ENCODE measurements at regions of chr17 and their contacts with region 1.

Region 1: GRCh38 chr17:47978324-47978723 is 7.4 kb downstream of the CDK5RAP3 start:
- DNase-seq: peak; percentile 63 to 93
- ATAC-seq: peak; percentile 82 to 95
- H3K4me3 ChIP-seq: no peak overlapping the region
- H3K27ac ChIP-seq: no peak overlapping the region
- H3K4me1 ChIP-seq: no peaks in the 10 kb centered on the region
- CTCF ChIP-seq: peak; percentile 82
- EP300 ChIP-seq: no peak
- POLR2A ChIP-seq: no peak
- RAD21 ChIP-seq: peak; percentile 80 to 83

Region 2: GRCh38 chr17:47789611-47790561 is 188.4 kb before region 1 on chr17:
- CTCF ChIA-PET with region 1: no interaction called
- POLR2A ChIA-PET with region 1: no interaction called
- DNase-seq: peak; percentile 79 to 92
- ATAC-seq: peak; percentile 99
- H3K4me3 ChIP-seq: peak overlapping the region; percentile 48
- H3K27ac ChIP-seq: peak overlapping the region; percentile 35 to 78; a peak in 4 of 6 replicates
- H3K4me1 ChIP-seq: peaks cover 3% of the 10 kb centered on the region; the same call in 1 of the 3 replicates
- CTCF ChIP-seq: peak; percentile 70
- EP300 ChIP-seq: no peak
- POLR2A ChIP-seq: no peak
- RAD21 ChIP-seq: peak; percentile 71 to 84

Region 3: DNA sequence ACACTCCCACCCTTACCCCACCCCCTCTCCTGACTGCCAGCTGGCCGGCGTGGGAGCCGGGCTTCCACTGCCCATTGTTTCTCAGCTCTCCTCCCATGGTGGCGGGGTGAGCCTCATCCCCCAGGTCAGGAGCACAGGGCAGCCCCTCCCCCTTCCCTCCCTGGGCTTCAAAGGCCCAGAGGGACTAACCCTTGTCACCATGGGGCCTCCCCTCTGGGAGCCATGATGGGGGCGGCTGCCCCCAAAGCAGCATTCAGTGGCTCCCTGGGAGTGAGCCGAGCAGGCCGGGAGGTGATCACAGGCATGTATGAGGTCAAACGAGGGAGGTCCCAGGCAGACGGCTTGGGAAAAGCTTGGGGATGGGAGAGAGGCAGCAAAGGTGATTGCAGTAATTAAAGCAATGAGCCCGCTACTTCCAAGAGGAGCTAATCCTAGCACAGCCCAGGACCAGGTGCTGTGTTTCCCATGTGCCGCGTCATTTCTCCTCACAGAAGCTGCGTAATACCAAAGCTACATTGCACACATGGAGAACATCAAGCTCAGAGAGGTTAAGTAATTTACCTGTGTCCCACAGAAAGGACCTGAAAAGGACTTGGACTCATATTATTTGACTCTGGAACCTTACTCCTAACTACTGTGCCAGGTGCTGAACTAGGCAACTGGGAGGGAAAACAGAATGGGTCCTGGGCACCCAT is 17.1 kb after region 1 on chr17:
- CTCF ChIA-PET with region 1: interaction called, 174 read pairs
- POLR2A ChIA-PET with region 1: no interaction called
- DNase-seq: no peak
- ATAC-seq: no peak
- H3K4me3 ChIP-seq: no peak overlapping the region
- H3K27ac ChIP-seq: no peak overlapping the region
- H3K4me1 ChIP-seq: no peaks in the 10 kb centered on the region
- CTCF ChIP-seq: no peak
- EP300 ChIP-seq: no peak
- POLR2A ChIP-seq: no peak
- RAD21 ChIP-seq: no peak

Region 4: GRCh38 chr17:48002266-48002915 is 24.1 kb after region 1 on chr17:
- CTCF ChIA-PET with region 1: interaction called, 766 read pairs
- POLR2A ChIA-PET with region 1: no interaction called
- DNase-seq: peak; percentile 36 to 56
- ATAC-seq: peak in 1 of 2 experiments; percentile 64; a peak in 3 of 6 replicates
- H3K4me3 ChIP-seq: no peak overlapping the region
- H3K27ac ChIP-seq: peak overlapping the region; percentile 75 to 84
- H3K4me1 ChIP-seq: peaks cover 16% of the 10 kb centered on the region
- CTCF ChIP-seq: no peak
- EP300 ChIP-seq: no peak
- POLR2A ChIP-seq: no peak
- RAD21 ChIP-seq: no peak

Region 5: DNA sequence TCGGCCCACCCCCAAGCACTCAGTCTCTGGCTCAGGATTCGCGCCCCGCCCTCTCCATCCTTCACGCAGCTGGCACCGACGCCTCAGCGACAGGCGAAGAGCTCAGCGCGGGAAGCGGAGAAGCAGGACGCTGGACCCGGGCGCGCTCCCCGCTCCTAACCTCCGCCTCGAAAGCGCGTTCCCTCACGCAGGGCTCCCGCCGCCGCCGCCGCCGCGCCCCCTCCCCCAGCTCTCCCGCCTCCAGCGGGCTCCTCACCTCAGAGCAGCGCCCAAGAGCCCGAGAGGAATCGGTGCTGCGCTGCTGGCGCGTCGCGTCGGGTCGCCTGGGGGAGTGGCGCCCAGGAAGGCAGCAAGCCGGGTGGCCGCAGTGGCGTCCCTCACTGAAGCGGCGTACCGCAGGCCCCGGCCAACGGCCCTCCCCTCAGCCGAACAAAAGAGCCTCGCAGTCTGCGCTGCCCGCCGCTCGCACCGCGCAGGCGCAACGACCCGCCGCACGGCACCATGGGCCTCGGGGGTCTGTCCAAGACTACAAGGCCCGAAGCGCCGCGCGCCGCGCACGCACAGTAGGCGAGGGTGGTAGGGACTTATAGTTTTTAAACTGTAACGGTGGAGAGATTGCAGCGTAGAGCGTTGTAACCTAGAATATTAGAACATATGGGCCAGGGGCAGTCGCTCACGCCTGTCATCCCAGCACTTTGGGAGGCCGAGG is 122.8 kb after region 1 on chr17 and contains the start of gene CBX1:
- CTCF ChIA-PET with region 1: interaction called, 11 read pairs
- POLR2A ChIA-PET with region 1: no interaction called
- DNase-seq: peak; percentile 92 to 99
- ATAC-seq: peak; percentile 93 to 97
- H3K4me3 ChIP-seq: peak within 1 kb of the TSS; percentile 76
- H3K27ac ChIP-seq: peak within 1 kb of the TSS; percentile 89 to 90
- H3K4me1 ChIP-seq: peaks cover 20% of the 10 kb centered on the region
- CTCF ChIP-seq: no peak
- EP300 ChIP-seq: no peak
- POLR2A ChIP-seq: peak; percentile 68
- RAD21 ChIP-seq: no peak
- polyA plus RNA-seq, gene CBX1: 69.6 and 84.4 TPM in 2 replicates

Region 6: GRCh38 chr17:48215583-48216139 is 237.3 kb after region 1 on chr17:
- CTCF ChIA-PET with region 1: no interaction called
- POLR2A ChIA-PET with region 1: no interaction called
- DNase-seq: peak; percentile 75 to 80
- ATAC-seq: peak; percentile 97 to 99
- H3K4me3 ChIP-seq: no peak overlapping the region
- H3K27ac ChIP-seq: peak overlapping the region in 1 of 2 experiments; percentile 2; a peak in 1 of 6 replicates
- H3K4me1 ChIP-seq: no peaks in the 10 kb centered on the region
- CTCF ChIP-seq: peak; percentile 85
- EP300 ChIP-seq: no peak
- POLR2A ChIP-seq: no peak
- RAD21 ChIP-seq: peak; percentile 94 to 98

Measured in A549 (cell line).